SK-N-SH (cell line): ENCODE measurements at regions of chr6 and their contacts with region 1.

Region 1: GRCh38 chr6:57021086-57021720 is 25.3 kb upstream of the KIAA1586 start:
- DNase-seq: peak; percentile 57
- H3K4me3 ChIP-seq: no peak overlapping the region
- H3K27ac ChIP-seq: no peak overlapping the region
- H3K4me1 ChIP-seq: no peaks in the 10 kb centered on the region
- H3K27me3 ChIP-seq: no peaks in the 10 kb centered on the region
- CTCF ChIP-seq: peak; percentile 71
- EP300 ChIP-seq: no peak
- RAD21 ChIP-seq: peak; percentile 65

Region 2: DNA sequence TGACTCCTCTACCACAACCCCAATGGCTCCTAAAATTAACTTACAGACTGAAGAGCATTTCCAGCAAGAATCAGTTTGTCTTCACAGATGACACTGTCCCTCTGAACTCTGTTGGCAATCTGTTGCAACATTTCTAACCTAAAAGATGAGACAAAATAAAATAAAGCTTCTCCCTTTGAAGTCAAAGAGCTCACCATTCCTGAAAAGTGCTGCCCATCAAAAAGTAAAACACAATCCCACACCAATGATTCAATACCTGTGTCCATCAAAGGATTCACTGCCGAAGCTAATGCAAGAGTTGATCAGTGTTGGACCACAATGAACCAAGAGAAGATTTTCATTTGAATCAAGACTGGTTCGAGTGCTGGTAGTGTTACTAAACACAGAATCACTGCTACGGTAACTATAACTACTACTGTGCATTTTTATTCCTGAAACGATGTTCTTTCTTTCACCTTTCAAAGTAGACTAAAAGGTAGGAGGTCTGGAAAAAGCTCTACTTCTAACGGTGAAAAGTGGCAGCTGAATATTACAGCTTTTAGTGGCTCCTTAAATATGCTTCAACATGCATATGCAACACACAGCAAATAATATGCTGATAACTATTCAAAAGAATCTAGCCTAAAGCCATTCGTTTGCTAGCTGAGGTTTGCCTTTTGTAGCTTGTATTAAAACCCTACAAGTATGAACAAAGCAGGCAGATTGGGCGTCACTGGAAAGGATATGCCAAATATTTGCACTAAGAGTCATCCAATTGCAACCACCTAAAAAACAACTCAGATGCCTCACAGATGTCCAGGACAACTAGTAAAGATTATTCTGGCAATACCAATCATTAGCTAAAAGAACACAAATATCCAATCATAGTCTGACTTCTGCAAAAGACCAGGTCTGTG is 378.6 kb before region 1 on chr6 and contains the start of gene DST:
- CTCF ChIA-PET with region 1: no interaction called
- POLR2A ChIA-PET with region 1: no interaction called
- DNase-seq: no peak
- H3K4me3 ChIP-seq: no peak within 1 kb of the TSS
- H3K27ac ChIP-seq: peak within 1 kb of the TSS; percentile 64 to 71
- H3K4me1 ChIP-seq: peaks cover 0 to 19% of the 10 kb centered on the region in 2 experiments; a peak in 2 of 4 replicates
- H3K27me3 ChIP-seq: no peaks in the 10 kb centered on the region
- CTCF ChIP-seq: no peak
- EP300 ChIP-seq: peak in 1 of 2 experiments; percentile 58; a peak in 1 of 4 replicates
- RAD21 ChIP-seq: no peak
- polyA plus RNA-seq, gene DST: 64.3 and 64.5 TPM in 2 replicates

Region 3: GRCh38 chr6:56992036-56992435 is 29.2 kb before region 1 on chr6:
- CTCF ChIA-PET with region 1: interaction called, 12 read pairs
- POLR2A ChIA-PET with region 1: no interaction called
- DNase-seq: no peak
- H3K4me3 ChIP-seq: no peak overlapping the region
- H3K27ac ChIP-seq: no peak overlapping the region
- H3K4me1 ChIP-seq: no peaks in the 10 kb centered on the region
- H3K27me3 ChIP-seq: no peaks in the 10 kb centered on the region
- CTCF ChIP-seq: no peak
- EP300 ChIP-seq: no peak
- RAD21 ChIP-seq: no peak